ENCODE measurements at regions of chr2 and their contacts with region 1.

Region 1: DNA sequence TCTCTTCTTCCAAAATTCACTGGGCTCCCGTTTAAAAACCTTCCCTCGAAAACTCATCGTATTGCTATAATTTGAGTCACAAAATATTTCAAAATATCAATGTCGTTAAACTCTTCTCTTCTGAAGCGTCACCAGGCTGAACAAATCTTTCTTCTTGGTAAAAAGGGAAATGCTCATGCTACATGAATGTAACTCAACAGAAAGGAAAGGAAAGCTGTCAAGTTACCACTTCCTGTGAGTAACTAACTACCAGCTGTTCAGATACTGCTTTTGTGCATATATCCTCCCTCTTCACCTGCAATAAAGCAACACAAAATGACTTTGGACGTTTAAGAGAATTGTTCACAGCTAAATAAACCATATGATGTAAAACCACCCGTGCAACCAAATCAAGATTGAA is 95.4 kb downstream of the DOCK10 start:
- DNase-seq: no peak
- ATAC-seq: peak; percentile 54
- H3K4me3 ChIP-seq: peak overlapping the region; percentile 78
- H3K27ac ChIP-seq: peak overlapping the region; percentile 86
- H3K4me1 ChIP-seq: peaks cover 49% of the 10 kb centered on the region
- H3K27me3 ChIP-seq: no peaks in the 10 kb centered on the region
- CTCF ChIP-seq: no peak
- EP300 ChIP-seq: peak in 1 of 2 experiments; percentile 52; a peak in 1 of 4 replicates
- POLR2A ChIP-seq: no peak
- RAD21 ChIP-seq: no peak

Region 2: DNA sequence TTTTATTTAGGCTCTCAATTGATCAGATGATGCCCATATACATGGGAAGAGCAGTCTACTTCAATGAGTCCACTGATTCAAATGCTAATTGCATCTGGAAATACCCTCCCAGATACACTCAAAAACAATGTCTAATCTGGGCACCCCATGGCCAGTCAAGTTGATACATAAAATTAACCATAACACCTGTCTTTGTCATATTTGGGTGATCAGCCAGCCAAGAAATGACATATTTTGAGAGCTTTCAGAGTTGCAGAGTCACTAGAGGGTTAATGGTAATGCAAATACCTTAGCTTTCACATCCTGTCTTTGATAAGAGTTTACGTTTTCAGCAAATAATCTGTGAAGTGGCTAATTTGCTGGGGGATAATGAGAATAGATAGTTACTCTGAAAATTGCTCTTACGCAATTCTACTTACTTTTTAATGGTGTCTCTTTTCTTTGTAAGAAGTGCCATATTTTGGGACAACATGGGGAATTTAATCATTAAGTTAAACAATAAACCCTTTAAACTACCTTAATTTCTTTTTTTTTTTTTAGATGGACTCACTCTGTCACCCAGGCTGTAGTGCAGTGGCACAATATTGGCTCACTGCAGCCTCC is 279.8 kb before region 1 on chr2:
- CTCF ChIA-PET with region 1: no interaction called
- POLR2A ChIA-PET with region 1: no interaction called
- RAD21 ChIA-PET with region 1: no interaction called
- SMC1A ChIA-PET with region 1: no interaction called
- in situ Hi-C with region 1: no loop called
- intact Hi-C with region 1: loop called (anchors 5 kb)
- DNase-seq: peak; percentile 92
- ATAC-seq: peak; percentile 97
- H3K4me3 ChIP-seq: 0 out of 2 replicates have a peak overlapping the region, but pooled peaks have one; percentile 10
- H3K27ac ChIP-seq: peak overlapping the region; percentile 48
- H3K4me1 ChIP-seq: peaks cover 3% of the 10 kb centered on the region
- H3K27me3 ChIP-seq: no peaks in the 10 kb centered on the region
- CTCF ChIP-seq: no peak
- EP300 ChIP-seq: peak; percentile 96 to 97
- POLR2A ChIP-seq: no peak
- RAD21 ChIP-seq: no peak

Region 3: DNA sequence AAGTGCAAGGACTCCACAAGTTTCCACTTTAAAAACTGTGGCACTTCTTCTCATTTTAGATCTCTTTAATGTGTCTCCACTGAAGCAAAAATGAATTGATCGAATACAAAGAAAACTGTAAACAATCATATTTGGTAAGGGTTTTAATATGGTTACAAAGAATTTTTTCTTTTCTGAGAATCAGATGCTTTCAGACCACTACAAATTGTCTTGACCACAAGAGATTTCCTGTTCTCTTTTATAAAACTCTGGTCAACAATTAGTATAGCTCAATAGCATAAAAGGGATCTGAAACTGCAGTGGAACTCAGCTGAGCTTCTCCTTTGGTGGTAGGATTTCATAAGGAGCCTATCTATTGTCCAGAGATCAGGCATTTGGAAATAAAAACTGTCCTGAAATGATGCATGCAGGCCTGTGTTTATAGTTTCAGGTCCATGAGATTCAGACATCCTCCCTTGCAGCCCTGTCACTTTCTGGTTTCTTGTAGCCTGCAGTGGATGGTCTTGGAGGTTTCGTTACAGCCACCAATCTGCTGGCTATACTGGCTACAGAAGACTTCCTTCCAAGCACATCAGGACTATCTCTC is 24.7 kb before region 1 on chr2:
- CTCF ChIA-PET with region 1: interaction called, 83 read pairs
- POLR2A ChIA-PET with region 1: interaction called, 34 read pairs
- RAD21 ChIA-PET with region 1: interaction called, 17 read pairs
- SMC1A ChIA-PET with region 1: interaction called, 443 read pairs
- in situ Hi-C with region 1: no loop called
- intact Hi-C with region 1: loop called (anchors 2 kb)
- DNase-seq: peak; percentile 71
- ATAC-seq: peak; percentile 78
- H3K4me3 ChIP-seq: no peak overlapping the region
- H3K27ac ChIP-seq: peak overlapping the region; percentile 47
- H3K4me1 ChIP-seq: peaks cover 45% of the 10 kb centered on the region
- H3K27me3 ChIP-seq: no peaks in the 10 kb centered on the region
- CTCF ChIP-seq: no peak
- EP300 ChIP-seq: peak; percentile 36 to 89; a peak in 3 of 4 replicates
- POLR2A ChIP-seq: no peak
- RAD21 ChIP-seq: no peak

Region 4: GRCh38 chr2:224982910-224983711 is 36.2 kb after region 1 on chr2:
- CTCF ChIA-PET with region 1: no interaction called
- POLR2A ChIA-PET with region 1: no interaction called
- RAD21 ChIA-PET with region 1: interaction called, 4 read pairs
- SMC1A ChIA-PET with region 1: interaction called, 9 read pairs
- in situ Hi-C with region 1: no loop called
- intact Hi-C with region 1: loop called (anchors 2 kb)
- DNase-seq: peak; percentile 61
- ATAC-seq: peak; percentile 85
- H3K4me3 ChIP-seq: peak overlapping the region; percentile 9
- H3K27ac ChIP-seq: peak overlapping the region; percentile 60
- H3K4me1 ChIP-seq: peaks cover 21% of the 10 kb centered on the region
- H3K27me3 ChIP-seq: no peaks in the 10 kb centered on the region
- CTCF ChIP-seq: no peak
- EP300 ChIP-seq: no peak
- POLR2A ChIP-seq: no peak
- RAD21 ChIP-seq: no peak

Region 5: DNA sequence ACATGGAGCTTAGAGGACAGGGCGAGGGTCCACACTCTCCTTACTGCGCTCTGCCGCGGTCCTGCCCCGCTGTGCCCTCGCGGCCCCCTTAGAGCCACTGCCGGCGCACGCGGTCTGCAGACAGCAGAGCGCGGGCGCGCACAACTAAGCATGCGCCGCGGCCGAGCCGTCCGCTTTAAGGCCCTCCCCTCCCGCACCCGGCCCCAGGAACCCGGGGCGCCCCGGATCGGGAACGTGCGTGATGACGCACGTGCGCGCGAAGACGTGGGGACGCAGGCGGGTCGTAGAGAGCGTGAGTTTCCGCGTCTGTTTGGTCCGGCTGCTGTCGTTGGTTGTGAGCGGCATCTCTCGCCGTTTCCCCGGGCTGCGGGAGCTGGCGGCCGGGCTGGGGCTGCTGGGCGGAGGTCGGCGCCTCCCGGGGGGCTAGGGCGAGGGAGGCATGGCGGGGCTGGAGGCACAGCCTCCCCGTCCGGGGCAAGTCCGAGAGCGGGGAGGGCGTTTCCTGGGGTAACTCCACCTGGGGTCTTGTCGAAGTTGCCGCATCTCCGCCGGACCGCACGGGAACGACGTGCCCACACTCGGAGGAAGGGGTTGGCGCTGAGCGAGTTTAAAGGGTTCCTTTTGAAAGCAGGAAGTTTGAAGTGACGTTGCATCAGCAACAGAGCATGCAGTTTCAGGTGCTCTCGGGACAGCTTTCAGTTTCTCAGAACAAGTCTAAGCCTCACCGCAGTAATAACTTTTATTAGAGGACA is 1889.1 kb after region 1 on chr2 and contains the start of gene RHBDD1:
- CTCF ChIA-PET with region 1: no interaction called
- POLR2A ChIA-PET with region 1: no interaction called
- RAD21 ChIA-PET with region 1: no interaction called
- SMC1A ChIA-PET with region 1: no interaction called
- in situ Hi-C with region 1: no loop called
- intact Hi-C with region 1: loop called (anchors 10 kb)
- DNase-seq: peak; percentile 86
- ATAC-seq: peak; percentile 88
- H3K4me3 ChIP-seq: peak within 1 kb of the TSS; percentile 79
- H3K27ac ChIP-seq: peak within 1 kb of the TSS; percentile 97
- H3K4me1 ChIP-seq: peaks cover 6% of the 10 kb centered on the region; the same call in 1 of the 2 replicates
- H3K27me3 ChIP-seq: no peaks in the 10 kb centered on the region
- CTCF ChIP-seq: no peak
- EP300 ChIP-seq: peak; percentile 36 to 49
- POLR2A ChIP-seq: peak; percentile 98
- RAD21 ChIP-seq: 0 out of 2 replicates have a peak, but pooled peaks have one; percentile 7
- polyA plus RNA-seq, gene RHBDD1: 7.1 to 7.3 TPM

Measured in GM12878 (cell line).